ENCODE measurements at regions of chr17 and their contacts with region 1.

Region 1: GRCh38 chr17:50094753-50095619 is at the start of gene PDK2:
- DNase-seq: peak; percentile 94 to 98 (median 97)
- ATAC-seq: peak; percentile 94
- H3K4me3 ChIP-seq: peak within 1 kb of the TSS; percentile 69 to 80
- H3K4me3 Mint-ChIP-seq: peak within 1 kb of the TSS; percentile 99
- H3K27ac ChIP-seq: peak within 1 kb of the TSS; percentile 71 to 82
- H3K27ac Mint-ChIP-seq: peak within 1 kb of the TSS; percentile 97
- H3K4me1 ChIP-seq: peaks cover 15% of the 10 kb centered on the region
- H3K4me1 Mint-ChIP-seq: peaks cover 34% of the 10 kb centered on the region
- H3K27me3 ChIP-seq: no peaks in the 10 kb centered on the region
- H3K27me3 Mint-ChIP-seq: no peaks in the 10 kb centered on the region
- CTCF ChIP-seq: no peak
- total RNA-seq, gene PDK2: 8.4 to 10.4 TPM

Region 2: DNA sequence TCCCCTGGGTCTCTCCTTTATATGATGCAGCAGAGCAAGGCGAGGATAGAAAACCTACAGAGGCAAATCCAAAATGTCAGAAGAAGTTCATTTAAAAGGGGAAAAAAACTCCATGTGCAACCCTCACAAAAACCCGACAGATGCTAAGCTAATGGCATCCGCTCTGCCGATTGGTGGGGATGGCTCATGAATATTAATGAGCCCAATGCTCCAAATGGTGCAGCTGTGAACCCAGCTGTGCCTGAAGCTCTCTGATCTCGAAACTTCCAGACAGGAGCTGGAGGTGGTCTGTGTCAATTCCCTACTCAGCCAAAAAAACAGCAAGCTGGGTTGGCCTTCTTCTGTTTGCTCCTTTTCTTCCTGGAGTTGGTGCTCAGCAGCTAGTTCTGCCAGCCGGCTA is 1971.9 kb before region 1 on chr17:
- CTCF ChIA-PET with region 1: no interaction called
- POLR2A ChIA-PET with region 1: no interaction called
- intact Hi-C with region 1: no loop called
- DNase-seq: no peak
- ATAC-seq: no peak
- H3K4me3 ChIP-seq: no peak overlapping the region
- H3K4me3 Mint-ChIP-seq: no peak overlapping the region
- H3K27ac ChIP-seq: no peak overlapping the region
- H3K27ac Mint-ChIP-seq: no peak overlapping the region
- H3K4me1 ChIP-seq: no peaks in the 10 kb centered on the region
- H3K4me1 Mint-ChIP-seq: no peaks in the 10 kb centered on the region
- H3K27me3 ChIP-seq: no peaks in the 10 kb centered on the region
- H3K27me3 Mint-ChIP-seq: no peaks in the 10 kb centered on the region
- CTCF ChIP-seq: no peak

Region 3: DNA sequence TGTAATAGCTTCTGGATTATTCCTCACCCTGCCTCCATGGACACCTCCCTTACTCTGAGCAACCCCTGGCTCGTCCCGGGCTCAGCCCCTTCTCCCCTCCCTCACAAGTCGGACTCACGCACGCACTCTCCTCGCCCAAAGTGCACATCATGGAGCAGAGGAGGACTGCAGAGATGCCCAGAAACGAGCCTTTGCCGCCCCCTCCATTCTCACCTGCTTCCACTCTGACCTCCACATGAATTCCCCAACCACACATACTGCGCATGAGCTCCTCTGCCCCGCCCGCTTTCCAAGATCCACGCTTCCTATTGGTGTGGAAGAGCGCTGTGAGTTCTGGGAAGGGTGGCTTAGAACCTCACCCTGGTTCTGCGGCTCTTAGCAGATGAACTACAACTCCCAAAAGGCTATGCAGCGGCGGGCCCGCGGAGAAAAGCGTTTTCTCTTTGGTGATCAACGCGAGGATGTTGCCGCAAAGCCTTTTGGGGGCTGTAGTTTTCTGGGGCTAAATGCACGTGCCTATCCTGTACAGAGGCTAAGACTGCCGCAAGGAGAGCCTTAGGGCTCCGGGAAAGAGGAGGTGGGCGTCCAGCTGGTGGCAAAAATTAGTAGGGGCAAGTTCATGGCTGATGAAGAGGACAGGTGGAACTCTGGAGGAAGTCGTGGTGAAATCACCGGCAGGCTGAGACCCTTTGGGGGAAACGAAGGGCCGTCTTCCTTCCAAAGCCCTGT is 680.2 kb before region 1 on chr17 and contains the start of gene PHB1:
- CTCF ChIA-PET with region 1: no interaction called
- POLR2A ChIA-PET with region 1: no interaction called
- intact Hi-C with region 1: loop called in 1 of 2 experiments (anchors 2 kb)
- DNase-seq: peak; percentile 86 to 98 (median 94)
- ATAC-seq: peak; percentile 98
- H3K4me3 ChIP-seq: peak within 1 kb of the TSS; percentile 80 to 96
- H3K4me3 Mint-ChIP-seq: peak within 1 kb of the TSS; percentile 99
- H3K27ac ChIP-seq: peak within 1 kb of the TSS; percentile 43 to 61
- H3K27ac Mint-ChIP-seq: peak within 1 kb of the TSS; percentile 93
- H3K4me1 ChIP-seq: peaks cover 12% of the 10 kb centered on the region
- H3K4me1 Mint-ChIP-seq: peaks cover 31% of the 10 kb centered on the region
- H3K27me3 ChIP-seq: no peaks in the 10 kb centered on the region
- H3K27me3 Mint-ChIP-seq: no peaks in the 10 kb centered on the region
- CTCF ChIP-seq: no peak
- total RNA-seq, gene PHB1: 26.3 to 27.0 TPM

Region 4: GRCh38 chr17:49788478-49789242 is 306.3 kb before region 1 on chr17 and contains the start of gene KAT7:
- CTCF ChIA-PET with region 1: no interaction called
- POLR2A ChIA-PET with region 1: no interaction called
- intact Hi-C with region 1: loop called in 1 of 2 experiments (anchors 2 kb)
- DNase-seq: peak; percentile 94 to 100 (median 98)
- ATAC-seq: peak; percentile 82
- H3K4me3 ChIP-seq: peak within 1 kb of the TSS; percentile 84 to 98
- H3K4me3 Mint-ChIP-seq: peak within 1 kb of the TSS; percentile 99
- H3K27ac ChIP-seq: peak within 1 kb of the TSS; percentile 96 to 99
- H3K27ac Mint-ChIP-seq: peak within 1 kb of the TSS; percentile 100
- H3K4me1 ChIP-seq: peaks cover 45% of the 10 kb centered on the region
- H3K4me1 Mint-ChIP-seq: peaks cover 54% of the 10 kb centered on the region
- H3K27me3 ChIP-seq: no peaks in the 10 kb centered on the region
- H3K27me3 Mint-ChIP-seq: no peaks in the 10 kb centered on the region
- CTCF ChIP-seq: no peak
- total RNA-seq, gene KAT7: 170 to 189 TPM

Region 5: GRCh38 chr17:50107790-50108414 is 12.9 kb after region 1 on chr17:
- CTCF ChIA-PET with region 1: interaction called, 14 read pairs
- POLR2A ChIA-PET with region 1: no interaction called
- intact Hi-C with region 1: no loop called
- DNase-seq: no peak
- ATAC-seq: no peak
- H3K4me3 ChIP-seq: no peak overlapping the region
- H3K4me3 Mint-ChIP-seq: no peak overlapping the region
- H3K27ac ChIP-seq: no peak overlapping the region
- H3K27ac Mint-ChIP-seq: no peak overlapping the region
- H3K4me1 ChIP-seq: no peaks in the 10 kb centered on the region
- H3K4me1 Mint-ChIP-seq: no peaks in the 10 kb centered on the region
- H3K27me3 ChIP-seq: no peaks in the 10 kb centered on the region
- H3K27me3 Mint-ChIP-seq: no peaks in the 10 kb centered on the region
- CTCF ChIP-seq: no peak

Region 6: GRCh38 chr17:50151041-50151936 is 56.3 kb after region 1 on chr17:
- CTCF ChIA-PET with region 1: interaction called, 13 read pairs
- POLR2A ChIA-PET with region 1: interaction called, 8 read pairs
- intact Hi-C with region 1: loop called (anchors 1 kb)
- DNase-seq: peak; percentile 64 to 92 (median 82)
- ATAC-seq: peak; percentile 65
- H3K4me3 ChIP-seq: peak overlapping the region; percentile 81 to 92
- H3K4me3 Mint-ChIP-seq: peak overlapping the region; percentile 86
- H3K27ac ChIP-seq: peak overlapping the region; percentile 22 to 70
- H3K27ac Mint-ChIP-seq: peak overlapping the region; percentile 89
- H3K4me1 ChIP-seq: peaks cover 44% of the 10 kb centered on the region
- H3K4me1 Mint-ChIP-seq: peaks cover 46% of the 10 kb centered on the region
- H3K27me3 ChIP-seq: no peaks in the 10 kb centered on the region
- H3K27me3 Mint-ChIP-seq: no peaks in the 10 kb centered on the region
- CTCF ChIP-seq: peak; percentile 57

Region 7: DNA sequence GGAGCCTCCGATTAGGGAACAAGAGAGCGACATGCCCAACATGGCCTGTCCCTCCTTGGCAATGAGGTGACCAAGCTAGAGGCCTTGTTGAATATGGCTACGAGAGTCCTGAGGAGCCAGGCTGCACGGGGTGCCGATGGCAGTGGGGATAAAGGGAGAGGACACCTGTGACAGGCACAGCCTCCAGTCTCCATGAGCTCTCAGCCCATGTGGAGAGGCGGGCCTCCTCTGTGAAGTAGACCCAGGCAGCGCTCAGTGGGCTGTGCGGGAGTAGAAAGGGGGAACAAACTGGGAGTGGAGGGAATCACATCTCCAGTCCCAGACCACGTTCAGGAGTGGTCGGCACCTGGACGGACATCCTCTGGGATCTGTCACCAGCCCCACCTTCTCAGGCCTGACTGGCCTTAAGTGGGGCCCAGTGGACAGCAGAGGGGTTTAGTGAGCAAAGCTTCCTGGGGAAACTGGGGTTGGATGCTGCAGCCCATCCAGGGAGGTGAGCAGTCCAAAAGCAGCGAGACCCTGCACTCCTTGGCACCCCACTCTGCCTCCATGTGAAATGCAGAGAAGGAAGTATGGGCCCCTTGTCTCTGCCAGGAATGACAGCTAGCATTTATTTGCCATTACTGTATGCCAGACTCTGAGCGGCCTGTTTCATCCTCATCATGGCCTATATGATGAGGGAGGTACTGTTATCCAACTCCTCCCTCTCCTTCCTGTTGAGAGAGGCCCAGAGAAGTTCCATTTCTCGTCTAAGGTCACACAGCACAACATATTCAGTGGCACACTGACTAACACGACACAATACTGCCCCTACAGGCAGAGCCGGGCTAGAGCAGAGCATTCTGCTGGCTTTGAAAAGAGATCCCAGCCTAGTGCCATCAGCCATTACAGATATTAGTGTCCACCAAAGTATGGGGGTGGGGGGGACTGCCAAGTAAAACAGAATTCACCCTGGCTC is 174.8 kb after region 1 on chr17:
- CTCF ChIA-PET with region 1: interaction called, 5 read pairs
- POLR2A ChIA-PET with region 1: no interaction called
- intact Hi-C with region 1: loop called in 1 of 2 experiments (anchors 1 kb)
- DNase-seq: peak; percentile 17 to 67 (median 53)
- ATAC-seq: peak; percentile 83
- H3K4me3 ChIP-seq: no peak overlapping the region
- H3K4me3 Mint-ChIP-seq: no peak overlapping the region
- H3K27ac ChIP-seq: no peak overlapping the region
- H3K27ac Mint-ChIP-seq: no peak overlapping the region
- H3K4me1 ChIP-seq: peaks cover 6% of the 10 kb centered on the region
- H3K4me1 Mint-ChIP-seq: peaks cover 5% of the 10 kb centered on the region
- H3K27me3 ChIP-seq: peaks cover 3 to 18% of the 10 kb centered on the region in 2 experiments
- H3K27me3 Mint-ChIP-seq: peaks cover 19% of the 10 kb centered on the region
- CTCF ChIP-seq: peak; percentile 73